ENCODE measurements at regions of chr18 and their contacts with region 1.

Region 1: DNA sequence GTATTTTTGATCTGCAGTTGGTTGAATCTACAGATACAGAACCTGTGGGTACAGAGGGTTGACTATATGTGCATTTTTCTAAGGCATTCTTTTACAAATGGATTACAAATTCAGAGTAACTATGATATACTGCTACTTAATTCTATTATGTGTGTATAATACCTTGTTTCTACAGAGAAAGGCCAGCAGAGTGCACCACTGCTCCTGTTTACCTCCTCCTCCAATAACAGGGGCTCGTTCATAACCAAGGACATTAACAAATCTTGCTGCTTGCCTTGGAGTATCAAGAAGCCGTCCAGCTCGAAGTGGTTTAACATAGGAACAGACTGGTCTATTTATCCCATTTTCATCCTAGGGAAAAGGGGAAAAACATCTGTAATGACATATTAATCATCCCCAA is 16.4 kb downstream of the CEP76 start:
- DNase-seq: no peak
- ATAC-seq: no peak
- H3K4me3 ChIP-seq: no peak overlapping the region
- H3K27ac ChIP-seq: no peak overlapping the region
- H3K4me1 ChIP-seq: no peaks in the 10 kb centered on the region
- H3K27me3 ChIP-seq: no peaks in the 10 kb centered on the region
- CTCF ChIP-seq: no peak
- POLR2A ChIP-seq: no peak

Region 2: DNA sequence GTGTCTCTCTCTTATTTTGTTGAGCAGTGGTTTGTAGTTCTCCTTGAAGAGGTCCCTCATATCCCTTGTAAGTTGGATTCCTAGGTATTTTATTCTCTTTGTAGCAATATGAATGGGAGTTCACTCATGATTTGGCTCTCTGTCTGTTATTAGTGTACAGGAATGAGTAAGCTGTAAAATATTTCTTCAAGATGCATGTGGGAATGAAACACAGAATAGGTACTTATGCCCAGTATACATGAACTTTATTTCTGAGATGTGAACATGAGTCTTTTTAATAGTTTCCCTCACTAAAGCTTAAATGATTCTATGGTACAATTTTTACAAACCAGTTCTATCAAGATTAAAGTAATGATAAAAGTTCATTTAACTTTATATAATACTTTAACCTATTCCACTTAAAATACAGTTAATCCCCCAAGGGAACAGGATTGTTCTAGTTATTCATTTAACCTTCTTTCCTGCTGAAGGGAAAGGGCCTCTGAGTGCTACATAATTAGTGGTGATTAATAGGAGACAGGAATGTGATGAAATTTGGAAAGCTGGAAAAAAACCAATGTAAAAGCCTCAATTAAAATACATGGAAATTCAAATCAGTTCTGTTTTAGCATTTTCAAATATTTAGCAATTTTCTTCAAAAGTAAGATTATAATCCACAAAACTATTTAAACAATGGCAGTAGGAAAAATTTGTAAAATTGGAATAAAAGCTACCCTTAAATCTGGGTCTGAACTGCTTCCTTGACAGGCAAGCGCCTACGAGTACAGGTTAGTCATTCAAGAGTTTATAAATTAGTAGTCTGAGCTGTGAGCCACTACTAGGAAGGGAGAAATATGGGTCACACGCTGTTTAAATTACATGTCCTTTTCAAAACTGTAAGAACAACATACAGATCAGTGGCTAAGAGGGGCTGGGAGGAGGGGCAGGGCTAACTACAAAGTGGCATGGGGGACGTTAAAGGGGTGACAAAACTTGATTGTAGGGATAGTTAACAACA is 57.1 kb before region 1 on chr18:
- intact Hi-C with region 1: loop called in 1 of 10 experiments (anchors 10 kb)
- DNase-seq: no peak
- ATAC-seq: no peak
- H3K4me3 ChIP-seq: no peak overlapping the region
- H3K27ac ChIP-seq: no peak overlapping the region
- H3K4me1 ChIP-seq: no peaks in the 10 kb centered on the region
- H3K27me3 ChIP-seq: no peaks in the 10 kb centered on the region
- CTCF ChIP-seq: no peak
- POLR2A ChIP-seq: no peak

Region 3: DNA sequence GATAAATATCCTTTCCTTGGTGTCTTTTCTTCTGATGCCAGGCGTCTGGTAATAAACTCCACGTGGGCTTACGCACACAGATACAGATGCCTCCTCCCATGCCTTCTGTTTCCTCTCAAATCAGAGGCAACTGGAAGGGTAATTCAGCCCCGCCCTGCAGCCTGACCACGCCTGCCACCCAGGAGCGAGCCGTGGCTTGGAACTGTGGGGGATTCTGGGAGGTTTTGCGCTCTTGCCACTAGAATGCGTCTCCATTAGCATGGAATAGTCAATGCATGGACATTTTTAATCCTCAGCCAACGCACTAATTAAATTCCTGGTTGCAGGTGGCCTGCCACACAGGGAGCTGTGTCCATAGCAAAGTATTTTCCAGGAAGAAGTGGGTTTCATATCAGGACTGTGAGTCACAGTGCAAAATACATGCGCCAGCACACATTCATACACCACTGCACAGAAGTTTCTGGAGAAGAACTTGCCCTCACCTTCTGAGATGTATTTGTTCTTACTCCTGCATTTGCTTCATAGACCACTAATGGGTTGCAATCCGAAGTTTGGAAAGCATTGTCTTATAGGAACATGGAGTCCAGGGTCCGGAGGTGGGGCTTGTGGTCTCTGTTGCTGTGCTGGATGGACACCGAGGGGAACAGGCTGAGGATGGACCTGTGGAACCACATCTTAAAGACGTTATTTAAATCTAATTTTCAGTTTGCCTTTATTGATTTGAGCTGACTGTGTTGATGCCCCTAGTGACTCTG is 683.8 kb after region 1 on chr18:
- intact Hi-C with region 1: no loop called
- DNase-seq: no peak
- ATAC-seq: peak in 1 of 4 donors; percentile 39
- H3K4me3 ChIP-seq: no peak overlapping the region
- H3K27ac ChIP-seq: no peak overlapping the region
- H3K4me1 ChIP-seq: peaks cover 0 to 27% (median 6%) of the 10 kb centered on the region in 12 donors
- H3K27me3 ChIP-seq: no peaks in the 10 kb centered on the region
- CTCF ChIP-seq: no peak
- POLR2A ChIP-seq: no peak

Measured in heart left ventricle (tissue), 16 donors.